Left ventricle myocardium superior (tissue), 1 donor: ENCODE measurements at regions of chr20 and their contacts with region 1.

Region 1: GRCh38 chr20:57514273-57514751 is 10.6 kb downstream of the CTCFL start:
- DNase-seq: peak; percentile 63
- ATAC-seq: peak; percentile 88

Region 2: GRCh38 chr20:57464715-57465211 is 49.5 kb before region 1 on chr20:
- intact Hi-C with region 1: no loop called
- DNase-seq: no peak
- ATAC-seq: no peak

Region 3: DNA sequence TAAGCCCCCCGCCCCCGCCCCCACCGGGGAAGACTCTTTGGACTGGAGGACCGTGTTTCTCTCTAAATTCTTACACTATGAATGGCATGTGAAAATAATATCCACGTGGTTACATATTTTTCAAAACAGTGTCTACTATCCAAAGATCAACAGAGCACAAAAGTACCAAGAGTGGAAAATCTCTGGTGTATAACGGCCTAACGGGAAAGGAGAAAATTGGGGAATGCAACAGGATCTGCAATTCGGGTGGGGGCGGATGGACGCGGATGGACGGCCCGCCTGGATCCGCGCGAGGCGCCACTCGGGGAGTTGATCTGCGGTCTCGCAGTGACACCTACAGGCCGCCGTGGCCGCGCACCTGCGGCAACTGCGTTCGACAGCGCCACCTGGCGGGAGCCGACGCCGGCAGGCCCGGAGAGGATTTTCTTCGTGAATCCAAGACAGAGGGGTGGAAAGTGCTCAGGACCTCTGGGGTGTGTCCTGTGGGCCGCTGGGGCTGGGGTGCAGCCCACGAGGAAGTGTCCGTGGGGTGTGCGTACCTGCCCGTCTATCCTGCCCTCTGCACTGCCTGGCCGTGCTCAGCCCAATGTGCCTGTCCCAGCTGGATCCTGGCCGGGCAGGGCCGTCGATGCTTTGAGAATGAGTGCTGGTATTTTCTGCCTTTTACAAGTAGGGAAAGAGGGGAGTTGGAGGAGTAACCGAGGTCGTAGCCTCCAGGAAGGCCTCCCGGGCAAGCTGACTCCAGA is 695.5 kb after region 1 on chr20:
- intact Hi-C with region 1: loop called (anchors 5 kb)
- DNase-seq: peak; percentile 93
- ATAC-seq: peak; percentile 92